ENCODE measurements at regions of chr6 and their contacts with region 1.

Region 1: DNA sequence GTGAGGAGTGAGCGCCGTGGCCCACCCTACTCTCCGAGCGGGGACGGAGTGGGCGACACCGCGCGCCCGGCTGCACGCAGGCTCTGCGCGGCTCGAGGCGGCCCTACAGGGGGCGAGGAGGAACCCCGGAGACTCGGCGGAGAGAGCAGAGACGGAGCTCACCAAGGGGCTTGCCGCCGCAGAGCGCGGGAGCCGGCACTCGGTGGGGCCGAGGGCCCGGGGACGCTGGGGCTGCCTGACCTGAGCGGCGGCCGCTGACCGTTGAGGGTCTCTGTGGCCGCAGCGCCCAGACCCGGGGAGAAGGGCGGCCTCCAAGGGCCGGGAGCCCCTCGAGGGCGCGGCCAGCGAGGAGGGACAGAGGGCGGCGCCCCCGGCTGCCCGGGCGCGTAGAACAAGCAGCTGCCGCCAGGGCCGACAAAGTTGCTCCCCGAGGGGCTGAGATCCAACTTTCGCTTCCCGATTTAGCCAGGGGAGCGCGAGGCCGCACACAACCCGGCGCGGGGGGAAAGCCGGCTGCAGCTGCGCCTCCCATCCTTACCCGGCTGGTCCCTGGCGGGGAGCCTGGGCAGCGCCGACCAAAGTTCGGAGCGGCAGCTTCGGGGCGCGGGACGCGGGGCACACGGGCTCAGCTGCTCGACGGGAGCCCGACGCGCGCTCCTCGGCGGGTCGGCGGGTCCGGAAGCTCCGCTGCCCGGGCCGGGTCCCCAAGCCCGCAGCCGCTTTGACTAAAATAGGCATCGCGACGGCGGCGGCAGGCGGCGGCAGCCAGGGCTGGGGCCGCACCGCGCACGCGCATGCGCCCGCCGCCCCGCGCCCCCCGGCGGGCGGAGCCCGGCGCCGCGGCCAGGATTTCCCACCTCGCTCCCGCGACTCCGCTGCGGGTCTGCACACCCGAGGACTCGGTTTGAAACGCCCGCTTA is 43.1 kb downstream of the POPDC3 start:
- DNase-seq: peak; percentile 50 to 69
- H3K4me3 ChIP-seq: peak overlapping the region; percentile 74
- H3K4me3 Mint-ChIP-seq: peak overlapping the region; percentile 76
- H3K27ac Mint-ChIP-seq: no peak overlapping the region
- H3K4me1 ChIP-seq: no peaks in the 10 kb centered on the region
- H3K4me1 Mint-ChIP-seq: no peaks in the 10 kb centered on the region
- H3K27me3 ChIP-seq: no peaks in the 10 kb centered on the region
- H3K27me3 Mint-ChIP-seq: peaks cover 10% of the 10 kb centered on the region
- CTCF ChIP-seq: peak in 1 of 2 experiments; percentile 8

Region 2: DNA sequence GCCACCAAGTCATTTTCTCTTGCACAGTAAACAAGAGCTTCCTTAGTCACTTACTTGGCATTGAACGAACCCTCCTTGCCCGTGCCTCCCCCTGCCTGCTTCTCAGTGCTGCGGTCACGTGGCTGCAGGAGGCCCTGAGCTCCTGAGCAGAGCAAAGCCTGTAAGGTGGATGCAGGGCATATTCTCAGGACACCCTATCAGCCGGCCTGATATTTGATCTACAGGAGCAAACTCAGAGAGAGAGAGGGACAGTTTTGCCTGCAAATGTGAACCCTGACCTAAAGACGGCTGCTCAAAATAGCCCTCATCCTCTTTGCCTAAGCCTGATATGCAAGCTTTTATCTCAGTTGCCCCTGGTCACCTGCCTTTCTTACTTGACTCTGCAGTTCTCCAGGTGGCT is 136.1 kb after region 1 on chr6:
- CTCF ChIA-PET with region 1: no interaction called
- POLR2A ChIA-PET with region 1: no interaction called
- intact Hi-C with region 1: loop called (anchors 5 kb)
- DNase-seq: peak; percentile 57 to 70
- H3K4me3 ChIP-seq: no peak overlapping the region
- H3K4me3 Mint-ChIP-seq: no peak overlapping the region
- H3K27ac Mint-ChIP-seq: no peak overlapping the region
- H3K4me1 ChIP-seq: peaks cover 15% of the 10 kb centered on the region
- H3K4me1 Mint-ChIP-seq: peaks cover 16% of the 10 kb centered on the region
- H3K27me3 ChIP-seq: no peaks in the 10 kb centered on the region
- H3K27me3 Mint-ChIP-seq: no peaks in the 10 kb centered on the region
- CTCF ChIP-seq: no peak

Measured in Caco-2 (cell line).